ENCODE measurements at regions of chr9 and their contacts with region 1.

Region 1: DNA sequence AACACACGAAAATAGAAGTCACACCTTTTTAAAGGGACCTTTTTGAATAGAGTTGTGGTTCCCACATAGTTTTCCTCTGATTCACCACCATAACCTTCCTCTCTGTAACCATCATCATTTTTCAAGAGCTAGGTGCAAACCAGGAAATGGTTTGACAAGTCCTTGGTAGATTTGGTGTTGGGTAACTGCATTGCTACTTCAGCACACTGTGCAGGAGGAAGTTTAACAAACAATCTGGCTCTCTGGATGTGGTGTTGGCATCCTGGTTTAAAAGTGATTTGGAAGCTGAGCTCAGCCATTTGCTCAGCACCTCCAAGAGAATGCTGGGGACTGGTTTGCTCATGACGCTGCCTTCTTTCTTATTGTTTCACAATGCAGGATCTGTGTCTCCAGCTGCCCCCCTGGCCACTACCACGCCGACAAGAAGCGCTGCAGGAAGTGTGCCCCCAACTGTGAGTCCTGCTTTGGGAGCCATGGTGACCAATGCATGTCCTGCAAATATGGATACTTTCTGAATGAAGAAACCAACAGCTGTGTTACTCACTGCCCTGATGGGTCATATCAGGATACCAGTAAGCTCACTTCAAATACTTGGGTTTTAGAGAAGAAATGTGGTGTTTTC is 213.1 kb downstream of the RFK start:
- DNase-seq: peak; percentile 9
- H3K4me3 Mint-ChIP-seq: no peak overlapping the region
- H3K27ac Mint-ChIP-seq: peak overlapping the region; percentile 65
- H3K4me1 Mint-ChIP-seq: peaks cover 57% of the 10 kb centered on the region
- H3K27me3 Mint-ChIP-seq: no peaks in the 10 kb centered on the region

Region 2: GRCh38 chr9:74528207-74528606 is 1652.9 kb before region 1 on chr9:
- intact Hi-C with region 1: no loop called
- DNase-seq: no peak
- H3K4me3 Mint-ChIP-seq: no peak overlapping the region
- H3K27ac Mint-ChIP-seq: no peak overlapping the region
- H3K4me1 Mint-ChIP-seq: no peaks in the 10 kb centered on the region
- H3K27me3 Mint-ChIP-seq: peaks cover 4% of the 10 kb centered on the region

Region 3: DNA sequence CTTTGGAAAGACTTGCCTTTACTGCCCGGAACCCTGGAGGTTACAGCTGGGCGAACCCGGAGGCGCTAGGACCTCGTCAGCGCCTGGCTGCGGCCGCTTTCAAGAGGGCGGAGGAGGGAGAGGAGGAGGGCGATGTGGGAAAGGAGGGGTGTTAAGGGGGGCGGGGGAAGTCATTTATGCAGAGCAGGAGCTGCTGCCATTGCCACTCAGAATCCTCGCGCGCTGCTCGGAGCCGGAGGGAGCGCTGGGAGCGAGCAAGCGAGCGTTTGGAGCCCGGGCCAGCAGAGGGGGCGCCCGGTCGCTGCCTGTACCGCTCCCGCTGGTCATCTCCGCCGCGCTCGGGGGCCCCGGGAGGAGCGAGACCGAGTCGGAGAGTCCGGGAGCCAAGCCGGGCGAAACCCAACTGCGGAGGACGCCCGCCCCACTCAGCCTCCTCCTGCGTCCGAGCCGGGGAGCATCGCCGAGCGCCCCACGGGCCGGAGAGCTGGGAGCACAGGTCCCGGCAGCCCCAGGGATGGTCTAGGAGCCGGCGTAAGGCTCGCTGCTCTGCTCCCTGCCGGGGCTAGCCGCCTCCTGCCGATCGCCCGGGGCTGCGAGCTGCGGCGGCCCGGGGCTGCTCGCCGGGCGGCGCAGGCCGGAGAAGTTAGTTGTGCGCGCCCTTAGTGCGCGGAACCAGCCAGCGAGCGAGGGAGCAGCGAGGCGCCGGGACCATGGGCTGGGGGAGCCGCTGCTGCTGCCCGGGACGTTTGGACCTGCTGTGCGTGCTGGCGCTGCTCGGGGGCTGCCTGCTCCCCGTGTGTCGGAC is 290.5 kb before region 1 on chr9 and contains the start of gene PCSK5:
- intact Hi-C with region 1: loop called (anchors 2 kb)
- DNase-seq: peak; percentile 81
- H3K4me3 Mint-ChIP-seq: peak within 1 kb of the TSS; percentile 91
- H3K27ac Mint-ChIP-seq: peak within 1 kb of the TSS; percentile 76
- H3K4me1 Mint-ChIP-seq: peaks cover 35% of the 10 kb centered on the region
- H3K27me3 Mint-ChIP-seq: peaks cover 37% of the 10 kb centered on the region
- total RNA-seq, gene PCSK5: 3.3 and 3.7 TPM in 2 replicates

Region 4: GRCh38 chr9:76116913-76117312 is 64.2 kb before region 1 on chr9:
- intact Hi-C with region 1: loop called (anchors 5 kb)
- DNase-seq: no peak
- H3K4me3 Mint-ChIP-seq: no peak overlapping the region
- H3K27ac Mint-ChIP-seq: no peak overlapping the region
- H3K4me1 Mint-ChIP-seq: peaks cover 5% of the 10 kb centered on the region
- H3K27me3 Mint-ChIP-seq: no peaks in the 10 kb centered on the region